Panc1 (cell line): ENCODE measurements at regions of chr10 and their contacts with region 1.

Region 1: GRCh38 chr10:48533533-48533932 is 71.3 kb downstream of the ARHGAP22 start:
- DNase-seq: no peak
- ATAC-seq: no peak
- H3K4me3 ChIP-seq: no peak overlapping the region
- H3K27ac ChIP-seq: no peak overlapping the region
- H3K4me1 ChIP-seq: no peaks in the 10 kb centered on the region
- H3K27me3 ChIP-seq: no peaks in the 10 kb centered on the region; the same call in 1 of the 2 replicates
- CTCF ChIP-seq: no peak

Region 2: DNA sequence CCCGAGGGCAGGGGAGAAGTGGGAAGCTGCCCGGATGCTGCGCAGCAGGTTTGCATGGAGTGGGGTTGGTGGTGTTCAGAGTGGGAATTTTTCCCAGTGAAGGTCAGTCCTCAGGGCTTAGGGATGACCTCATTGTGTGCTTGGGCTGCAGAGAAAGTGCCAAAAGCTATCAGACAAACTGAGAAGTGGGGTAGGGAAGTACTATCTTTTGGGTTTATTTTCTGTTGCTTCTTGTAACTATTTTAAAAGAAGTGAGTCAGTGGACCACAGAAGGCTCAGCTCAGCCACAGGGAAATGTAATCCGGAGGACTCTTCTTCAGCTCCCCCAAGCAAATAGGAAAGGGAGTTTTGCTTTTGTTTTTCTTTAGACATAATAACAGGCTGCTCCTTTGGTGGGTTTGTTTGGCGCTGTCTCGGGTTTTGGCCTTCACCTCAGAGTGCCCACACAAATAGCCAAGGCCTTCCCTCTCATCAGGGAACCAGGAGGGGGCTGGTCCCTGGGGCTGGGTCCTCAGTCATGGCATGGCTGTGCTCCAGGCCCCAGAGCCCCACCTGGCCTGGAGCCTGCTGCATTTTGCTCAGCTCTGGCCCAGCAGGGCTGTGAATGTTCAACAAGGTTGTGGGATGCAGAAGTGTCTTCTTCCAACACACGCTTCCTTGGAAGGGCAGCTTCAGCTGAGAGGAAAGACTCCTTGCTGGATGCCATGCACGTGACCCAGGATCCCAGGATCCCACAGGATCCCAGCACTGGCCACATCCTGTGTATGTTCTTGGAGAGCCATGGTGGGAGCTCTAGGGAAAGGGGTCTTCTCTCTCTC is 605.7 kb after region 1 on chr10:
- CTCF ChIA-PET with region 1: interaction called, 10 read pairs
- POLR2A ChIA-PET with region 1: no interaction called
- in situ Hi-C with region 1: no loop called
- intact Hi-C with region 1: no loop called
- DNase-seq: no peak
- ATAC-seq: no peak
- H3K4me3 ChIP-seq: no peak overlapping the region
- H3K27ac ChIP-seq: no peak overlapping the region
- H3K4me1 ChIP-seq: no peaks in the 10 kb centered on the region
- H3K27me3 ChIP-seq: peaks cover 8% of the 10 kb centered on the region
- CTCF ChIP-seq: no peak